ENCODE measurements at regions of chr5 and their contacts with region 1.

Region 1: GRCh38 chr5:141320225-141321169 is at the start of gene TAF7:
- DNase-seq: peak; percentile 92 to 93 (median 93)
- H3K4me3 ChIP-seq: peak within 1 kb of the TSS; percentile 54 to 77
- H3K4me3 Mint-ChIP-seq: peak within 1 kb of the TSS; percentile 90 to 99 (median 98)
- H3K27ac ChIP-seq: peak within 1 kb of the TSS; percentile 97
- H3K27ac Mint-ChIP-seq: peak within 1 kb of the TSS; percentile 93 to 100 (median 97)
- H3K4me1 ChIP-seq: peaks cover 15% of the 10 kb centered on the region
- H3K4me1 Mint-ChIP-seq: peaks cover 20 to 32% (median 26%) of the 10 kb centered on the region in 4 donors
- H3K27me3 ChIP-seq: no peaks in the 10 kb centered on the region
- H3K27me3 Mint-ChIP-seq: peaks cover 0 to 2% of the 10 kb centered on the region in 2 donors
- total RNA-seq, gene TAF7: 109 to 119 TPM

Region 2: GRCh38 chr5:140107312-140108083 is 1213.0 kb before region 1 on chr5:
- CTCF ChIA-PET with region 1: no interaction called
- POLR2A ChIA-PET with region 1: no interaction called
- intact Hi-C with region 1: loop called (anchors 10 kb)
- DNase-seq: peak; percentile 95 to 96 (median 95)
- H3K4me3 ChIP-seq: peak overlapping the region; percentile 77 to 88
- H3K4me3 Mint-ChIP-seq: peak overlapping the region; percentile 92 to 100 (median 97)
- H3K27ac ChIP-seq: peak overlapping the region; percentile 94
- H3K27ac Mint-ChIP-seq: peak overlapping the region; percentile 97 to 100 (median 99)
- H3K4me1 ChIP-seq: peaks cover 47% of the 10 kb centered on the region
- H3K4me1 Mint-ChIP-seq: peaks cover 19 to 51% (median 39%) of the 10 kb centered on the region in 4 donors
- H3K27me3 ChIP-seq: no peaks in the 10 kb centered on the region
- H3K27me3 Mint-ChIP-seq: no peaks in the 10 kb centered on the region

Region 3: GRCh38 chr5:141412854-141413539 is 92.5 kb after region 1 on chr5 and contains the start of gene PCDHGA10:
- CTCF ChIA-PET with region 1: interaction called, 9 read pairs
- POLR2A ChIA-PET with region 1: interaction called, 4 read pairs
- intact Hi-C with region 1: loop called (anchors 10 kb)
- DNase-seq: peak; percentile 53 to 61 (median 59)
- H3K4me3 ChIP-seq: peak within 1 kb of the TSS; percentile 14 to 51
- H3K4me3 Mint-ChIP-seq: peak within 1 kb of the TSS; percentile 81 to 92 (median 89)
- H3K27ac ChIP-seq: no peak within 1 kb of the TSS
- H3K27ac Mint-ChIP-seq: peak within 1 kb of the TSS in 5 of 7 donors; percentile 30 to 87 (median 69)
- H3K4me1 ChIP-seq: peaks cover 8% of the 10 kb centered on the region
- H3K4me1 Mint-ChIP-seq: peaks cover 11 to 20% (median 15%) of the 10 kb centered on the region in 4 donors
- H3K27me3 ChIP-seq: peaks cover 22% of the 10 kb centered on the region
- H3K27me3 Mint-ChIP-seq: peaks cover 36 to 56% of the 10 kb centered on the region in 2 donors
- total RNA-seq, gene PCDHGA10: 0.25 to 0.35 TPM

Region 4: DNA sequence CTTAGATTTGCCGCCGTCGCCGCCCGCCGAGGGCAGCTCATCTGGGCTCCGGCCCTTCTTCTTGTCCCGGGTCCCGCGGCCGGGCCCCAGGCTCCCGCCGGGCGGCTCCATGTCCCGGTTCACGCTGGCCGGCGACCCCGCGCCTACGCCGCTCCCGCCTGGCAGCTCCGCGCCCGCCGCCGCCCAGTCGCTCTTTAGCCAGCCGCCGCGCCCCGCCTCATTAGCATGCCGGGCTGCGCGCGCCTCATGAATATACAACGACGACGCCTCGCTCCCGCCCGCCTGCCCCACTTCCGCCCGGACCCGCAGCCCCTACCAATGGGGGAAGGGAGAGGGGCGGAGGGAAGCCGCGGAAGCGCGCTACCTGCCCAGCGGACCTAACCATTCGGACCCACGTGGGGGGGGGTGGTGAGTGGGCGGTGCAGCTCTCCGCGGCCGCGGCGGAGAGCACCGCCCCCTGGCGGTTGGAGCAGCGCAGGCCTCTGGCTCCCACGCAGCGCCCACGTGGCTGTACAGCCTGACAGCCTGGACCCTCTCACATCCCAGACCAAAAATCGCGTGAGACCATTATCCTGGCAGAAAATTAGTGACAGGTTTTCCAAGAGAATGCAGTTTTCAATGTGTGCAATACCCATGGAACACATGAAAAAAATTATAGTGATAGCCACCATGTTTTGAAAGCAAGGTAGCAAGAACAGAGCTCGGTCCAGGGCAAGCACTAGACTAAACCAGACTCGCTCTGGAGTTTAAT is 298.5 kb after region 1 on chr5 and contains the start of gene DIAPH1:
- CTCF ChIA-PET with region 1: interaction called, 4 read pairs
- POLR2A ChIA-PET with region 1: interaction called, 6 read pairs
- intact Hi-C with region 1: loop called (anchors 2 kb)
- DNase-seq: peak; percentile 96 to 98 (median 97)
- H3K4me3 ChIP-seq: peak within 1 kb of the TSS; percentile 86 to 95
- H3K4me3 Mint-ChIP-seq: peak within 1 kb of the TSS; percentile 94 to 100 (median 98)
- H3K27ac ChIP-seq: peak within 1 kb of the TSS; percentile 86
- H3K27ac Mint-ChIP-seq: peak within 1 kb of the TSS; percentile 93 to 99 (median 98)
- H3K4me1 ChIP-seq: peaks cover 45% of the 10 kb centered on the region
- H3K4me1 Mint-ChIP-seq: peaks cover 33 to 57% (median 44%) of the 10 kb centered on the region in 4 donors
- H3K27me3 ChIP-seq: no peaks in the 10 kb centered on the region
- H3K27me3 Mint-ChIP-seq: no peaks in the 10 kb centered on the region
- total RNA-seq, gene DIAPH1: 211 TPM

Region 5: DNA sequence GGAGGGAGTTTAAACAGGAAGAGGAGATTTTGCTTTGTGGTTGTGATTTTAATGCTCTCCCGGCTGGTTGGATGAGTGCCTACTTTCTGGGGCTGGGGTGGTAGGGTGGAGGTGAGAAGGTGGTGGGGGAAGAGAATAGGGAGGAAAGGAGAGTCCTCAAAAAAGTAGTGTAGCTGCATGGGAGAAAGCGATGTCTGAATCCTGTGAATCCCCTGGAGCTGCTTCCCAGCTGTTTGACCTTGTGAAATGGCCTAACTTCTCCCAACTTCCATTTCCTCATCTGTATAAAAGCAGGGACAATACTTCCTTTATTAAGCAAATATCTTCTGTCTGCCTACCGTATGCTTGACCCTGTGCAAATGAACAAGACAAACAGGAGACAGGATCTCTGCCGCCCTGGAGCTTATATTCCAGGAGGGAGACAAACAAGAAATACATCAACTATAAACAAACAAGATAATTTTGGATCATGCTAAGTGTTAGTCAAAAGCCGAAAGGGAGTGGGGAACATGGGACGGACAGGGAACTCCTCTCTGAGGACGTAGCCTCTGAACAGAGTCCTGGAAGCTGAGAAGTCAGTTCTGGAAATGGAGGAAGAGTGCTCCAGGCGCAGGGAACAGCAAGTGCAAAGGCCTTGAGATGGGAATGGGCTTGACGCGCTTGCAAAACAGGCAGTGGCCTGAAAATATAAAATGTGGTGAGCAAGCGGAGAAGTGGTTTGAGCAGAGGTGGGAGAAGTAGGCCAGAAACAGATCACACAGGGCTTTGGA is 900.8 kb after region 1 on chr5:
- CTCF ChIA-PET with region 1: no interaction called
- POLR2A ChIA-PET with region 1: no interaction called
- intact Hi-C with region 1: loop called (anchors 5 kb)
- DNase-seq: no peak
- H3K4me3 ChIP-seq: no peak overlapping the region
- H3K4me3 Mint-ChIP-seq: no peak overlapping the region
- H3K27ac ChIP-seq: no peak overlapping the region
- H3K27ac Mint-ChIP-seq: peak overlapping the region in 4 of 7 donors; percentile 6 to 58 (median 45)
- H3K4me1 ChIP-seq: peaks cover 32% of the 10 kb centered on the region
- H3K4me1 Mint-ChIP-seq: peaks cover 22 to 44% (median 33%) of the 10 kb centered on the region in 4 donors
- H3K27me3 ChIP-seq: no peaks in the 10 kb centered on the region
- H3K27me3 Mint-ChIP-seq: no peaks in the 10 kb centered on the region